Esophagus muscularis mucosa (tissue), 4 donors: ENCODE measurements at regions of chr1 and their contacts with region 1.

Region 1: GRCh38 chr1:213244664-213245091 is 193.6 kb downstream of the RPS6KC1 start:
- DNase-seq: no peak
- H3K4me3 ChIP-seq: no peak overlapping the region
- H3K27ac ChIP-seq: no peak overlapping the region
- H3K4me1 ChIP-seq: no peaks in the 10 kb centered on the region
- H3K27me3 ChIP-seq: no peaks in the 10 kb centered on the region
- CTCF ChIP-seq: peak; percentile 54 to 74 (median 70)
- EP300 ChIP-seq: no peak
- POLR2A ChIP-seq: no peak

Region 2: GRCh38 chr1:213122514-213122929 is 122.2 kb before region 1 on chr1:
- intact Hi-C with region 1: loop called (anchors 5 kb)
- DNase-seq: no peak
- H3K4me3 ChIP-seq: no peak overlapping the region
- H3K27ac ChIP-seq: no peak overlapping the region
- H3K4me1 ChIP-seq: peaks cover 0 to 5% (median 0%) of the 10 kb centered on the region in 4 donors
- H3K27me3 ChIP-seq: no peaks in the 10 kb centered on the region
- CTCF ChIP-seq: peak; percentile 21 to 64 (median 57)
- EP300 ChIP-seq: no peak
- POLR2A ChIP-seq: no peak